Mucosa of descending colon (tissue), 3 donors: ENCODE measurements at regions of chr18 and their contacts with region 1.

Region 1: GRCh38 chr18:3151399-3152264 is 68.1 kb downstream of the MYOM1 start:
- DNase-seq: peak in 1 of 3 donors; percentile 19
- ATAC-seq: peak; percentile 60
- H3K4me3 ChIP-seq: no peak overlapping the region
- H3K4me1 ChIP-seq: no peaks in the 10 kb centered on the region
- CTCF ChIP-seq: peak; percentile 39

Region 2: DNA sequence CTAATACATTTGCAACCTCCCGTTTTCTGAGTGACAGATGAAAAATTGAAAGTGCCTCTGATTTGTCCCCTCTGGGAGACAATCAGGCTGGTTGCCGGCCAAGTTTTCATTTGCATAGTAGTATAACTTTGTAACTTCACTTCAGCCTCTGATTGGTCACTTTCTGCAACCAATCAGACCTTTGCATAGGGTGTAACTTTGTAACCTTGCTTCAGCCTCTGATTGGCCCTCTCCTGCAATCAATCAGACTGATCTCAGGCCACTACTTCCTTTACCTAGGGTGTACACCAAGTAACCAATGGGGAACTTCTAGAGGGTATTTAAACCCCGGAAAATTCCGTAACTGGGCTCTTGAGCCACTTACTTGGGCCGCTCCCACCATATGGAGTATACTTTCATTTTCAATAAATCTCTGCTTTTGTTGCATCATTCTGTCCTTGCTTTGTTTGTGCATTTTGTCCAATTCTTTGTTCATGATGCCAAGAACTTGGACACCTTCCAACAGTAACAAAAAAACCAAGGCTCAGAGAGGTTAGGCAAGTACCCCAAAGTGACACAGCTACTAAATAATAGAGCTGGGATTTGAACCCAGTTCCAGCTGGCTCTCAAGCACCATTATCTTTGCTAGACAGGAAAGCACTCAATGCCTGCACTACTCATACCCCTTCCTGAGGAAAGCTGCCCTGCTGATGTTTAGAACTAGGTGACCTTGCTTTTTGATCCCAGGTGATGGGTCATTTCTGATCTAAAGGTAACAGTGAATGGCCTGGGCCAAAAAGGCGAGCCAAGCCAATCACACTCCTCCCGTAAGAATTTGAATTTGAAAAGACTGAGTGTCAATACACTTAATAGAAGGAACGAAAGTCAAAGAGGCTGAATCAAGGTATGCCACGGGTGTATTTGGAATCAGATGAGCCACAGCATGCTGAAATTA is 79.0 kb after region 1 on chr18:
- intact Hi-C with region 1: loop called in 1 of 2 experiments (anchors 10 kb)
- DNase-seq: no peak
- ATAC-seq: peak; percentile 80
- H3K4me3 ChIP-seq: no peak overlapping the region
- H3K4me1 ChIP-seq: peaks cover 6% of the 10 kb centered on the region
- CTCF ChIP-seq: no peak

Region 3: GRCh38 chr18:3245853-3246634 is 94.4 kb after region 1 on chr18:
- intact Hi-C with region 1: loop called in 1 of 2 experiments (anchors 10 kb)
- DNase-seq: peak; percentile 90 to 95 (median 92)
- ATAC-seq: peak; percentile 77
- H3K4me3 ChIP-seq: no peak overlapping the region
- H3K4me1 ChIP-seq: peaks cover 18% of the 10 kb centered on the region
- CTCF ChIP-seq: peak; percentile 93

Region 4: DNA sequence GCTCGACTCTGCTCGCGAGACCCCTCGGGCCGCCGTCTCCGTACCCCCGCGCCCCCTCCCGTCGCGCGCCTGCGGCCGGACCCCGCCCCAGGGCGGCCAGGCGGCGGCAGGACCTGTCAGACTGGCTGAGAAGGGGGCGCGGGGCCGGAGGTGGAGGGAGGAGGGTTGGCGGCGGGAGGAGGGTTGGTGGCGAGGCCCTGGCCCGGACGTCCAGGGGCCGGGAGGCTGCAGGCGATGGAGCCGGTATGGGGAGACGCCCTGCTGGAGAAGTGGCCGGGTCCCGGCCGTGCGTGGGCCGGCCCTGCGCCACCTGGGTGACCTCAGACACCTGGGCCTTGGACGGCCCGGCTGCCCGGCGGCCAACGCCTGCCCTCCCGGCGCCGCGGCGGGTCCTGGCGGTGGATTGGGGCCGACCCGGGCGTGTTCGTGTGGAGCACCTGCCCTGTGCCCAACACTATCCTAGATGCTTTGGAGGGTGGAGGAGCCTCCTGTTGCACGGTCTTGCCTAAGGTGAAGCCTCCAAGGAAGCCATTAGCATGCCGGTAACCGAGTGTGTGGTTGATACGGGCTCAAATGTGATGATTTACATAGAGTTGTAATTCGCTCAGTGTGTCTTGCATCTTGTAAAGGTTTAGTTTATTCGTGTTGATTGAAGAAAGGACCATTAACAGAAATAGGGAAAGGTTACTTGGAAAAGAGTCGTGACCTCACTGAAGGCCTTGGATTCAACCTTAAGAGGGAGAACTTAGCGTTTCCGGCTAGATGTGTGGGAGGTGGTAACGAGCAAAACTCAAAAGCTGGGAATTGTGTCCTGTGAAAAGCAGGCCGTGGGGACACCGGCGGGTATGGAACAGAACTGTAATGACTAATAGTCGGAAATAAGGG is 110.9 kb after region 1 on chr18:
- intact Hi-C with region 1: no loop called
- DNase-seq: peak in 2 of 3 donors; percentile 45 to 67
- ATAC-seq: peak; percentile 60
- H3K4me3 ChIP-seq: peak overlapping the region; percentile 82
- H3K4me1 ChIP-seq: peaks cover 47% of the 10 kb centered on the region
- CTCF ChIP-seq: no peak